PC-9 (cell line): ENCODE measurements at regions of chr18 and their contacts with region 1.

Region 1: GRCh38 chr18:24075731-24076130 is 61.2 kb downstream of the TTC39C start:
- DNase-seq: no peak
- H3K4me3 ChIP-seq: no peak overlapping the region
- H3K27ac ChIP-seq: 0 out of 2 replicates have a peak overlapping the region, but pooled peaks have one; percentile 39
- H3K4me1 ChIP-seq: peaks cover 5% of the 10 kb centered on the region
- H3K27me3 ChIP-seq: no peaks in the 10 kb centered on the region
- CTCF ChIP-seq: no peak

Region 2: DNA sequence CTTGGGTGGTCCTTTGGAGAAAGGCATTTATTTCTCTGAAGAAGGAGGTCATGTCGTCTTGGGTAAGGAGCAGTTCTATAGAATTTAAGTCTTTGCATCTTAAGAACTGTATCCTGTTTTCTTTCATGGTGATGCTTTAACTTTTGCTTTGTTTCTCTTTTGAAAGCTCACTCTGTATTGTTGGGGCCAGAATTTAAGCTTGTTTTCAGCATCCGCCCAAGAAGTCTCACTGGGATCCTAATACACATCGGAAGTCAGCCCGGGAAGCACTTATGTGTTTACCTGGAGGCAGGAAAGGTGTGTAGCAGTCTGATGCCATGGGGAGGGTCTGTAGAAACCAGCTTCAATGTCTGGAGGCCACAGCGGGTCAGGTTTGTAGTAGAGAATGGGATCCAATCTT is 125.9 kb before region 1 on chr18:
- CTCF ChIA-PET with region 1: no interaction called
- POLR2A ChIA-PET with region 1: no interaction called
- intact Hi-C with region 1: loop called (anchors 5 kb)
- DNase-seq: no peak
- H3K4me3 ChIP-seq: no peak overlapping the region
- H3K27ac ChIP-seq: no peak overlapping the region
- H3K4me1 ChIP-seq: no peaks in the 10 kb centered on the region
- H3K27me3 ChIP-seq: no peaks in the 10 kb centered on the region
- CTCF ChIP-seq: no peak

Region 3: DNA sequence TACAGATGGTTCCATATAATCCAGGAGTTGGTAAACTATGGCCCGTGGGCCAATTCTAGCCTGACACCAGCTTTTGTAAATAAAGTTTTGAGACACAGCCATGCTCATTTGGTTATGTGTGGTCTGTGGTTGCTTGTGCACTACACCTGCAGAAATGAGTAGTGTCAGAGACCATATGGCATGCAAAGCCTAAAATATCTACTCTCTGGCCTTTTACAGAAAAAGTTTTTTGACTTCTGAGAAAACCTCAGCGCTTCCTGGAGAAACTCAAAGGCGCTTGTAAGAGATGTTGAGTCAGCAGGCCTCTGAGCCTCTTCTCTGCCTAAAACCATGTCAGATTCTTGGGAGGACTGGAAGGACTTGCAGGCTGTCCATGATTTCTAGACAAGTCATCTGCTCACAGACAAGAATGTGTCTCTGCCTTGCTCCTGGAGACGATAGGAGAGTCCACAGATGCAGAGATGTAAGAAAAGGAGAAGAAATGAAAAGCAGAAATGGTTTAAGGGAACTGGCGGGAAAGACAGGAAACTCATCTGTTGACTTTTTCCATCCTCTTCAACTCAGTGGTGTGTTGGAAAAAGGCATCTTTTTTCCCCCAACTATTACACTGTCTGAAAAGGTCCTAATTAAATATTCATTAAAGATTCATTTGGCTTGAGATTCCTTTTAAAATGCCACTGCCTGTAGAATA is 55.9 kb before region 1 on chr18:
- CTCF ChIA-PET with region 1: no interaction called
- POLR2A ChIA-PET with region 1: no interaction called
- intact Hi-C with region 1: loop called (anchors 2 kb)
- DNase-seq: no peak
- H3K4me3 ChIP-seq: no peak overlapping the region
- H3K27ac ChIP-seq: no peak overlapping the region
- H3K4me1 ChIP-seq: peaks cover 50% of the 10 kb centered on the region
- H3K27me3 ChIP-seq: no peaks in the 10 kb centered on the region
- CTCF ChIP-seq: no peak